ENCODE measurements at regions of chr7 and their contacts with region 1.

Region 1: GRCh38 chr7:116236020-116236630 is 25.8 kb downstream of the TES start:
- DNase-seq: peak; percentile 37 to 71 (median 48)
- H3K4me3 ChIP-seq: no peak overlapping the region
- H3K4me3 Mint-ChIP-seq: no peak overlapping the region
- H3K27ac ChIP-seq: no peak overlapping the region
- H3K27ac Mint-ChIP-seq: no peak overlapping the region
- H3K4me1 ChIP-seq: peaks cover 32 to 36% of the 10 kb centered on the region in 2 donors
- H3K4me1 Mint-ChIP-seq: peaks cover 36% of the 10 kb centered on the region
- H3K27me3 ChIP-seq: no peaks in the 10 kb centered on the region
- H3K27me3 Mint-ChIP-seq: no peaks in the 10 kb centered on the region
- CTCF ChIP-seq: peak; percentile 76

Region 2: GRCh38 chr7:115941703-115942268 is 294.3 kb before region 1 on chr7:
- intact Hi-C with region 1: no loop called
- DNase-seq: no peak
- H3K4me3 ChIP-seq: no peak overlapping the region
- H3K4me3 Mint-ChIP-seq: no peak overlapping the region
- H3K27ac ChIP-seq: no peak overlapping the region
- H3K27ac Mint-ChIP-seq: no peak overlapping the region
- H3K4me1 ChIP-seq: peaks cover 0 to 4% of the 10 kb centered on the region in 2 donors
- H3K4me1 Mint-ChIP-seq: peaks cover 4% of the 10 kb centered on the region
- H3K27me3 ChIP-seq: no peaks in the 10 kb centered on the region
- H3K27me3 Mint-ChIP-seq: no peaks in the 10 kb centered on the region
- CTCF ChIP-seq: no peak

Region 3: GRCh38 chr7:116138202-116138801 is 97.8 kb before region 1 on chr7:
- intact Hi-C with region 1: loop called in 1 of 2 experiments (anchors 10 kb)
- DNase-seq: peak; percentile 46 to 63 (median 61)
- H3K4me3 ChIP-seq: no peak overlapping the region
- H3K4me3 Mint-ChIP-seq: no peak overlapping the region
- H3K27ac ChIP-seq: no peak overlapping the region
- H3K27ac Mint-ChIP-seq: no peak overlapping the region
- H3K4me1 ChIP-seq: peaks cover 9 to 10% of the 10 kb centered on the region in 2 donors
- H3K4me1 Mint-ChIP-seq: peaks cover 11% of the 10 kb centered on the region
- H3K27me3 ChIP-seq: no peaks in the 10 kb centered on the region
- H3K27me3 Mint-ChIP-seq: peaks cover 0 to 1% (median 0%) of the 10 kb centered on the region in 3 donors
- CTCF ChIP-seq: peak; percentile 87

Region 4: GRCh38 chr7:116173051-116174028 is 62.8 kb before region 1 on chr7:
- intact Hi-C with region 1: loop called in 1 of 2 experiments (anchors 5 kb)
- DNase-seq: peak; percentile 51 to 73 (median 54)
- H3K4me3 ChIP-seq: no peak overlapping the region
- H3K4me3 Mint-ChIP-seq: no peak overlapping the region
- H3K27ac ChIP-seq: no peak overlapping the region
- H3K27ac Mint-ChIP-seq: no peak overlapping the region
- H3K4me1 ChIP-seq: no peaks in the 10 kb centered on the region
- H3K4me1 Mint-ChIP-seq: no peaks in the 10 kb centered on the region
- H3K27me3 ChIP-seq: no peaks in the 10 kb centered on the region
- H3K27me3 Mint-ChIP-seq: no peaks in the 10 kb centered on the region
- CTCF ChIP-seq: peak; percentile 82

Region 5: DNA sequence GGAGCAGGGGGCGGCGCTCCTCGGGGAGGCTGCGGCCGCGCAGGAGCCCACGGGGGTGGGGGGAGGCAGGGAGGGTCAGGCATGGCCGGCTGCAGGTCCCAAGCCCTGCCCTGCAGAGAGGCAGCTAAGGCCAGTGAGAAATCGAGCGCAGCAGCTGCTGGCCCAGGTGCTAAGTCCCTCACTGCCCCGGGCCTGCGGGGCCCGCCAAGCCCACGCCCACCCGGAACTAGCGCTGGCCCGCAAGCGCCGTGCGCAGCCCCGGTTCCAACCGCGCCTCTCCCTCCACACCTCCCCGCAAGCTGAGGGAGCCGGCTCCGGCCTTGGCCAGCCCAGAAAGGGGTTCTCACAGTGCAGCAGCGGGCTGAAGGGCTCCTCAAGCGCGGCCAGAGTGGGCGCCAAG is 54.1 kb before region 1 on chr7:
- intact Hi-C with region 1: loop called (anchors 2 to 5 kb)
- DNase-seq: no peak
- H3K4me3 ChIP-seq: no peak overlapping the region
- H3K4me3 Mint-ChIP-seq: no peak overlapping the region
- H3K27ac ChIP-seq: no peak overlapping the region
- H3K27ac Mint-ChIP-seq: no peak overlapping the region
- H3K4me1 ChIP-seq: no peaks in the 10 kb centered on the region
- H3K4me1 Mint-ChIP-seq: peaks cover 1% of the 10 kb centered on the region
- H3K27me3 ChIP-seq: no peaks in the 10 kb centered on the region
- H3K27me3 Mint-ChIP-seq: peaks cover 0 to 3% (median 0%) of the 10 kb centered on the region in 3 donors
- CTCF ChIP-seq: no peak